MCF 10A (cell line): ENCODE measurements at regions of chr19 and their contacts with region 1.

Region 1: GRCh38 chr19:48842789-48843162 is 6.5 kb upstream of the HSD17B14 start:
- DNase-seq: peak; percentile 67
- H3K4me3 Mint-ChIP-seq: no peak overlapping the region
- H3K27ac Mint-ChIP-seq: no peak overlapping the region
- H3K4me1 Mint-ChIP-seq: peaks cover 6% of the 10 kb centered on the region
- H3K27me3 Mint-ChIP-seq: no peaks in the 10 kb centered on the region
- CTCF ChIP-seq: peak; percentile 65

Region 2: GRCh38 chr19:48646001-48646721 is 196.6 kb before region 1 on chr19 and contains the start of gene CA11:
- CTCF ChIA-PET with region 1: interaction called, 7 read pairs
- POLR2A ChIA-PET with region 1: interaction called, 4 read pairs
- intact Hi-C with region 1: loop called (anchors 1 kb)
- DNase-seq: peak; percentile 90
- H3K4me3 Mint-ChIP-seq: peak within 1 kb of the TSS; percentile 73
- H3K27ac Mint-ChIP-seq: peak within 1 kb of the TSS; percentile 4
- H3K4me1 Mint-ChIP-seq: peaks cover 24% of the 10 kb centered on the region
- H3K27me3 Mint-ChIP-seq: peaks cover 10% of the 10 kb centered on the region
- CTCF ChIP-seq: peak; percentile 89
- total RNA-seq, gene CA11: 2.6 and 2.9 TPM in 2 replicates

Region 3: DNA sequence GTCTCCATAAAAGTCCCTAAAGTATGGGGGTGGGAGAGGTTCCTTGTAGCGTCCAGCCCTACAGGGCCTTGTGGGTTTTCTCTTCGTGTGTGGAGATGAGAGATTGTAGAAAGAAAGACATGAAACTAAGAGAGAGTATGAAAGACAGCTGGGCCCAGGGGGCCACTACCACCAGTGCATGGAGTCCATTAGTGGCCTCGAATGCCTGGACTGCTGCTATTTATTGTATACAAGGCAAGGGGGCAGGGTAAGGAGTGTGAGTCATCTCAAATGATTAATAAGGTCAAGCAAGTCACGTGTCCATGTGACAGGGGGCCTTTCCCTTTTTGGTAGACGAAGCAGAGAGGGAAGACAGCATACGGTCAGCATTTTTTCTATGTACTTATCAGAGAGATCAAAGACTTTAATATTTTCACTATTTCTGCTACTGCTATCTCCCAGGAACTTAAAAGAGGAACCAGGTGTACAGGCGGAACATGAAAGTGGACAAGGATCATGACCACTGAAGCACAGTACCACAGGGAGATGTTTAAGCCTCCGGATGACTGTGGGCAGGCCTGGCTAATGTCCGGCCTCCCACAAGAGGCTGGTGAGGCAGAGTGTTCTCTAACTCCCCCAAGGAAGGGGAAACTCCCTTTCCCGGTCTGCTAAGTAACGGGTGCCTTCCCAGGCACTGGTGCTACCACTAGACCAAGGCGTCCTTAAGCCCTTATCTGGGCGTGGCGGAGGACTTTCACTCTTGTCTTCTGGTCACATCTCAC is 62.0 kb before region 1 on chr19:
- CTCF ChIA-PET with region 1: interaction called, 18 read pairs
- POLR2A ChIA-PET with region 1: interaction called, 5 read pairs
- intact Hi-C with region 1: no loop called
- DNase-seq: peak; percentile 46
- H3K4me3 Mint-ChIP-seq: no peak overlapping the region
- H3K27ac Mint-ChIP-seq: peak overlapping the region; percentile 11
- H3K4me1 Mint-ChIP-seq: peaks cover 8% of the 10 kb centered on the region
- H3K27me3 Mint-ChIP-seq: no peaks in the 10 kb centered on the region
- CTCF ChIP-seq: no peak

Region 4: DNA sequence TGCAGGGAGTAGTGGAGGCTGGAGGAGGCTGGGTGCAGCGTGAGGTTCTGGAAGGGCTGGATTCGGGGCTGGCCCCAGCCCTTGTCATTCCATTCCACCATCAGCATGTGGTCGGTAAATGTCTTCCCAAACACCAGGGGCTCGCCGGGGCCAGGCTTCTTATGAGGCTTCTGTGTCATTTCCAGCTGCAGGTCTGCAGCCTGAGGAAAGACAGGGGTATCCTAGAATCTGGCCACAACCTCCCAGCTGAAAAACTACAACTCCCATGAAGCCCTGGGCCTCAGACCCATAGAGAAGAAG is 36.3 kb before region 1 on chr19:
- CTCF ChIA-PET with region 1: interaction called, 10 read pairs
- POLR2A ChIA-PET with region 1: no interaction called
- intact Hi-C with region 1: no loop called
- DNase-seq: no peak
- H3K4me3 Mint-ChIP-seq: no peak overlapping the region
- H3K27ac Mint-ChIP-seq: no peak overlapping the region
- H3K4me1 Mint-ChIP-seq: peaks cover 26% of the 10 kb centered on the region
- H3K27me3 Mint-ChIP-seq: no peaks in the 10 kb centered on the region
- CTCF ChIP-seq: no peak

Region 5: DNA sequence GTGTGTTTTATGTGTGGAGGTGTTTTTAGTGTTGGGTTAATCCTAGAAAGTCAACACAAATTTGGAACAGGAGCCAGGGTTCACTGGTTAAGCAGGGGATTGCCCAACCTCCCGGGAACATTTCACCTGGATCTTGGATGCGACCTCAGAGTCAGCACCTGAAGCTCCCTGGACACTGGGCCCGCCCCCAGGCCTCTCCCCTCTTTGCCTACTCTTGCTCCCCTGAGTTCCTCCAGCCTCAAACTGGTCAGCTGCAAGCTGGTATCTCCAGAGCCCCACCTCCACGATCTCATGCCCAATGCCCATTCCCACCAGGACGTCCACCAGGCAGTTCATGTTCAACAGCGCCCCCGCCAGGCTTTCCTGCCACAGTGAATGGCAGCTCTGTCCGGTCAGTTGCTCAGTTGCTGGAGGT is 16.2 kb before region 1 on chr19:
- CTCF ChIA-PET with region 1: interaction called, 14 read pairs
- POLR2A ChIA-PET with region 1: no interaction called
- intact Hi-C with region 1: no loop called
- DNase-seq: peak; percentile 58
- H3K4me3 Mint-ChIP-seq: no peak overlapping the region
- H3K27ac Mint-ChIP-seq: no peak overlapping the region
- H3K4me1 Mint-ChIP-seq: no peaks in the 10 kb centered on the region
- H3K27me3 Mint-ChIP-seq: no peaks in the 10 kb centered on the region
- CTCF ChIP-seq: peak; percentile 10

Region 6: DNA sequence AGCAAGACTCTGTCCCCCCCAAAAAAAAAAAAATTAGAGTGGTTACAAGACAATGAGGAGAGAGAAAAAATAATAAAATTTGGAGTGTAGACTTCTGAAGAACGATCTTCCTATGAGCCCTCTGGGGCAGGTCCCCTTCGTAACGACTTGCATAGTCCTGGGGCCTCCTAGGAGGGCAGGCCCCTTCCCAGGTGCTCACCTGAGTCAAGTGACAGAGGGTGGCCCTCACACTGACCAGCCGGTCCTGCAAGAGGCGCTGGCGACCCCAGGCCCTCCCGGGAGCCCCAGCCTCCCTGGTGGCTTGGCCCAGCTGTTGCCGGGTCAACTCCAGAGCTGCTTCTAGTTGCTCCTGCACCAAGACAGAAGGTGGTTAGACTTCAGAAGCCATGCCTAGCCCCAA is 10.7 kb after region 1 on chr19:
- CTCF ChIA-PET with region 1: interaction called, 18 read pairs
- POLR2A ChIA-PET with region 1: interaction called, 3 read pairs
- intact Hi-C with region 1: no loop called
- DNase-seq: no peak
- H3K4me3 Mint-ChIP-seq: no peak overlapping the region
- H3K27ac Mint-ChIP-seq: no peak overlapping the region
- H3K4me1 Mint-ChIP-seq: no peaks in the 10 kb centered on the region
- H3K27me3 Mint-ChIP-seq: no peaks in the 10 kb centered on the region
- CTCF ChIP-seq: no peak

Region 7: GRCh38 chr19:48933382-48933932 is 90.7 kb after region 1 on chr19 and contains the start of gene DHDH:
- CTCF ChIA-PET with region 1: interaction called, 10 read pairs
- POLR2A ChIA-PET with region 1: no interaction called
- intact Hi-C with region 1: no loop called
- DNase-seq: peak; percentile 90
- H3K4me3 Mint-ChIP-seq: peak within 1 kb of the TSS; percentile 75
- H3K27ac Mint-ChIP-seq: no peak within 1 kb of the TSS
- H3K4me1 Mint-ChIP-seq: peaks cover 5% of the 10 kb centered on the region
- H3K27me3 Mint-ChIP-seq: no peaks in the 10 kb centered on the region
- CTCF ChIP-seq: no peak
- total RNA-seq, gene DHDH: not detected in 2 replicates

Region 8: DNA sequence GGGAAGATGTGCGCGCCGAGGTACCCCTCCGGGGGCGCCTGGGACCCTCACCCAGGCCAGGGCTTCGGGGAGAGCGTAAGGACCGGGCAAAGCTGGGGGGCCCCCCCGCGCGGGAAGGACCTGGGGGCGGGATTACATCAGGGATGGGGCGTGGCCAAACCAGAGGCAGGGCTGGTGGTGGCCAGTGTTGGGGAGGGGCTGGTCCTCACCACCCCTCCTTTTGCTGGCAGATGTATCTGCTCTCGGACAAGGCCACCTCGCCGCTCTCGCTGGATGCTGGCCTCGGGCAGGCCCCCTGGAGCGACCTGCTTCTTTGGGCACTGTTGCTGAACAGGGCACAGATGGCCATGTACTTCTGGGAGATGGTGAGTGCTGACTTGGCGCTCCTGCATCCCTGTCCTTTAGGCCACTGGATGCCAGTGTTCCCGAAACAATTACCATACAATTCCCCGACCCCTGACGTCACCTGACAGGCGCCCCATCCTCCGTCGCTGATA is 340.1 kb after region 1 on chr19:
- CTCF ChIA-PET with region 1: no interaction called
- POLR2A ChIA-PET with region 1: no interaction called
- intact Hi-C with region 1: no loop called
- DNase-seq: no peak
- H3K4me3 Mint-ChIP-seq: no peak overlapping the region
- H3K27ac Mint-ChIP-seq: no peak overlapping the region
- H3K4me1 Mint-ChIP-seq: no peaks in the 10 kb centered on the region
- H3K27me3 Mint-ChIP-seq: no peaks in the 10 kb centered on the region
- CTCF ChIP-seq: no peak